Natural killer cell (primary cell): ENCODE measurements at regions of chr16 and their contacts with region 1.

Region 1: GRCh38 chr16:17668386-17668785 is 197.6 kb upstream of the XYLT1 start:
- DNase-seq: no peak
- ATAC-seq: no peak
- H3K4me3 ChIP-seq: no peak overlapping the region
- H3K4me3 Mint-ChIP-seq: no peak overlapping the region
- H3K27ac ChIP-seq: no peak overlapping the region
- H3K27ac Mint-ChIP-seq: no peak overlapping the region
- H3K4me1 ChIP-seq: no peaks in the 10 kb centered on the region
- H3K4me1 Mint-ChIP-seq: no peaks in the 10 kb centered on the region
- H3K27me3 ChIP-seq: peaks cover 2% of the 10 kb centered on the region
- H3K27me3 Mint-ChIP-seq: peaks cover 6 to 9% of the 10 kb centered on the region in 2 donors
- CTCF ChIP-seq: no peak

Region 2: DNA sequence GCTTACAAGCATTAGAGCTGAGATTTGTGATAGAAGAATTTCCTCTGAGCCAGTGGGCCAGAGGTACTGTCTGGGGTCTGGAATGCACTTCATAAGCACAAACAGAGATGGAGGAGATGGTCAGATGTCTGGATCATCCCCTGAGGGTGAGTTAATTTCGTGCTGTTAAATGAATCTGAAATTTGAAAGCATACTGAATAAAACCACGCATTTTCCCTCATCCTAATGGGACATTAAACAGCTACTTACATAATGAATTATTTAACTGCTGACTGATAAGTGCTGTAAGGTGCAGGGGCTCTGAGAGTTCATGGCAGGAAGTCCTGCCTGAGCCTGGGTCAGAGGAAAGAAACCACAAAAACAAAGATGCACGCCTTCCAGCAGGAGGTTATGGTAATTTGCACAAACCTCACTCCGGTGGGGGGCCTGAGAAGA is 61.3 kb before region 1 on chr16:
- intact Hi-C with region 1: no loop called
- DNase-seq: peak in 1 of 2 donors; percentile 16
- ATAC-seq: peak in 1 of 3 donors; percentile 52
- H3K4me3 ChIP-seq: no peak overlapping the region
- H3K4me3 Mint-ChIP-seq: peak overlapping the region; percentile 10
- H3K27ac ChIP-seq: no peak overlapping the region
- H3K27ac Mint-ChIP-seq: no peak overlapping the region
- H3K4me1 ChIP-seq: peaks cover 11% of the 10 kb centered on the region
- H3K4me1 Mint-ChIP-seq: peaks cover 13 to 18% of the 10 kb centered on the region in 2 donors
- H3K27me3 ChIP-seq: no peaks in the 10 kb centered on the region
- H3K27me3 Mint-ChIP-seq: peaks cover 0 to 18% of the 10 kb centered on the region in 2 donors
- CTCF ChIP-seq: no peak

Region 3: DNA sequence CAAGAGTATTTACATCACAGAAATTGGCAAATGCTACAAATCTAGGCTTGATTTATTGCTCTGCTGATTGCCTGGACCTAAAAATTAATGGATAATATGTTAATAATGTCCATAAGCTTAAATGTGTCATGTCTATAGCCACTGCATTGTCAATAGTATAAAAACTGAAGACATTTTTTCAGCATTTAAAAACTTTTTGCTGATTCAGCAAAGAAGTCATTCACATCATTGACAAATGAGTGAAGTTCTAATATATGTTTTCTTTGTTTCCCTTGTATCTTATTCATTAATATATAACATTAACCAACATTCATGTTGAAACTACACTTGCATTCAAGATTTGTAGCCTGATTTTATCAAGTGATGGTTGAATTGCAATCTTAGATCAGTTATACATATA is 17.1 kb after region 1 on chr16:
- intact Hi-C with region 1: loop called (anchors 2 kb)
- DNase-seq: no peak
- ATAC-seq: no peak
- H3K4me3 ChIP-seq: no peak overlapping the region
- H3K4me3 Mint-ChIP-seq: no peak overlapping the region
- H3K27ac ChIP-seq: no peak overlapping the region
- H3K27ac Mint-ChIP-seq: no peak overlapping the region
- H3K4me1 ChIP-seq: no peaks in the 10 kb centered on the region
- H3K4me1 Mint-ChIP-seq: no peaks in the 10 kb centered on the region
- H3K27me3 ChIP-seq: no peaks in the 10 kb centered on the region
- H3K27me3 Mint-ChIP-seq: peaks cover 13 to 22% of the 10 kb centered on the region in 2 donors
- CTCF ChIP-seq: no peak

Region 4: GRCh38 chr16:17696616-17697015 is 28.2 kb after region 1 on chr16:
- intact Hi-C with region 1: no loop called
- DNase-seq: no peak
- ATAC-seq: no peak
- H3K4me3 ChIP-seq: no peak overlapping the region
- H3K4me3 Mint-ChIP-seq: no peak overlapping the region
- H3K27ac ChIP-seq: no peak overlapping the region
- H3K27ac Mint-ChIP-seq: no peak overlapping the region
- H3K4me1 ChIP-seq: no peaks in the 10 kb centered on the region
- H3K4me1 Mint-ChIP-seq: no peaks in the 10 kb centered on the region
- H3K27me3 ChIP-seq: no peaks in the 10 kb centered on the region
- H3K27me3 Mint-ChIP-seq: peaks cover 11 to 30% of the 10 kb centered on the region in 2 donors
- CTCF ChIP-seq: no peak

Region 5: GRCh38 chr16:17718495-17718894 is 50.1 kb after region 1 on chr16:
- intact Hi-C with region 1: no loop called
- DNase-seq: no peak
- ATAC-seq: no peak
- H3K4me3 ChIP-seq: no peak overlapping the region
- H3K4me3 Mint-ChIP-seq: no peak overlapping the region
- H3K27ac ChIP-seq: no peak overlapping the region
- H3K27ac Mint-ChIP-seq: no peak overlapping the region
- H3K4me1 ChIP-seq: no peaks in the 10 kb centered on the region
- H3K4me1 Mint-ChIP-seq: no peaks in the 10 kb centered on the region
- H3K27me3 ChIP-seq: no peaks in the 10 kb centered on the region
- H3K27me3 Mint-ChIP-seq: peaks cover 16 to 27% of the 10 kb centered on the region in 2 donors
- CTCF ChIP-seq: no peak

Region 6: GRCh38 chr16:17743578-17743977 is 75.2 kb after region 1 on chr16:
- intact Hi-C with region 1: no loop called
- DNase-seq: no peak
- ATAC-seq: no peak
- H3K4me3 ChIP-seq: no peak overlapping the region
- H3K4me3 Mint-ChIP-seq: no peak overlapping the region
- H3K27ac ChIP-seq: no peak overlapping the region
- H3K27ac Mint-ChIP-seq: no peak overlapping the region
- H3K4me1 ChIP-seq: no peaks in the 10 kb centered on the region
- H3K4me1 Mint-ChIP-seq: no peaks in the 10 kb centered on the region
- H3K27me3 ChIP-seq: no peaks in the 10 kb centered on the region
- H3K27me3 Mint-ChIP-seq: peaks cover 0 to 5% of the 10 kb centered on the region in 2 donors
- CTCF ChIP-seq: no peak